HCT116 (cell line): ENCODE measurements at regions of chr16 and their contacts with region 1.

Region 1: GRCh38 chr16:55701442-55702319 is 45.9 kb downstream of the SLC6A2 start:
- DNase-seq: peak; percentile 46
- ATAC-seq: peak; percentile 93
- H3K4me3 ChIP-seq: no peak overlapping the region
- H3K27ac ChIP-seq: no peak overlapping the region
- H3K4me1 ChIP-seq: no peaks in the 10 kb centered on the region
- H3K27me3 ChIP-seq: peaks cover 34% of the 10 kb centered on the region
- CTCF ChIP-seq: peak; percentile 79 to 85 (median 82)
- POLR2A ChIP-seq: no peak
- RAD21 ChIP-seq: peak; percentile 73

Region 2: GRCh38 chr16:55494994-55495421 is 206.7 kb before region 1 on chr16:
- CTCF ChIA-PET with region 1: interaction called, 14 read pairs
- POLR2A ChIA-PET with region 1: no interaction called
- RAD21 ChIA-PET with region 1: interaction called in 1 of 2 experiments, 3 read pairs
- intact Hi-C with region 1: loop called (anchors 1 kb)
- DNase-seq: no peak
- ATAC-seq: peak; percentile 70
- H3K4me3 ChIP-seq: no peak overlapping the region
- H3K27ac ChIP-seq: no peak overlapping the region
- H3K4me1 ChIP-seq: peaks cover 5 to 9% of the 10 kb centered on the region in 2 experiments
- H3K27me3 ChIP-seq: 0 out of 2 replicates have a peak, but pooled peaks cover 2% of the 10 kb centered on the region
- CTCF ChIP-seq: peak; percentile 5 to 46 (median 25); a peak in 3 of 6 replicates
- POLR2A ChIP-seq: no peak
- RAD21 ChIP-seq: peak; percentile 72

Region 3: DNA sequence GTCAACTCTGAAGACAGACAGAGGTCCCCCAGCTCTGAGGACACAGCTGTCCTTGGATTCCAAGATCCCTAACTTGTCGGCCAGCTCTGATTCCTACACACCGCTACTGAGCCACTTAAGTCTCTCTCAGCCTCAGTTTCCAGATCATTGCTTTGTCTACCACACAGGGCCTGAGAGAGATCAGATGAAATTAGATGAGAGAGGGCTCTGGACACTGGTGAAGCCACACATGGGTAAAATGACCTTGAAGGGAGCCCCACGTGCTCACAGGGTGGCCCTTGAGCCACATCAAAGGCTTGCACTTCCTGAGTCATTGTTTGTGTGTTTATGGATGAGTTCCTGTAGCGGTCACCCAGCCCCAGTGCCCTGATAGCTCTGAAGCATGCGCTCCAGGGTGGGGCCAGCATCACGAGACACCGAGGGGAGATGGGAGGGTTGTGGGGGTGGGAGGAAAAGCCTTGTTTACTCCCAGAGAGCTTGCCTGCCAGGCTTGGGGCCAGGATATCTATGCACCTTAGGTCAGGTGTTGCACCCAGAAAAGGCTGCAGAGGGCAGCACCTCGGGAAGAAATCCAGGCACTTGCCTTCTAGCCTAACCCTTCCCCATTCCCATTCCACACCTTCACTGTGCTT is 78.6 kb before region 1 on chr16:
- CTCF ChIA-PET with region 1: no interaction called
- POLR2A ChIA-PET with region 1: no interaction called
- RAD21 ChIA-PET with region 1: no interaction called
- intact Hi-C with region 1: loop called (anchors 5 kb)
- DNase-seq: peak; percentile 15
- ATAC-seq: peak; percentile 97
- H3K4me3 ChIP-seq: no peak overlapping the region
- H3K27ac ChIP-seq: no peak overlapping the region
- H3K4me1 ChIP-seq: peaks cover 0 to 10% of the 10 kb centered on the region in 2 experiments; a peak in 3 of 4 replicates
- H3K27me3 ChIP-seq: 0 out of 2 replicates have a peak, but pooled peaks cover 5% of the 10 kb centered on the region
- CTCF ChIP-seq: peak; percentile 36 to 68 (median 55); a peak in 5 of 6 replicates
- POLR2A ChIP-seq: no peak
- RAD21 ChIP-seq: peak; percentile 26; the same call in 1 of the 2 replicates

Region 4: GRCh38 chr16:55981557-55981956 is 279.9 kb after region 1 on chr16:
- CTCF ChIA-PET with region 1: no interaction called
- POLR2A ChIA-PET with region 1: no interaction called
- RAD21 ChIA-PET with region 1: no interaction called
- intact Hi-C with region 1: no loop called
- DNase-seq: no peak
- ATAC-seq: no peak
- H3K4me3 ChIP-seq: no peak overlapping the region
- H3K27ac ChIP-seq: no peak overlapping the region
- H3K4me1 ChIP-seq: no peaks in the 10 kb centered on the region
- H3K27me3 ChIP-seq: peaks cover 38% of the 10 kb centered on the region
- CTCF ChIP-seq: no peak
- POLR2A ChIP-seq: no peak
- RAD21 ChIP-seq: no peak